Esophagus squamous epithelium (tissue), 5 donors: ENCODE measurements at regions of chr22 and their contacts with region 1.

Region 1: DNA sequence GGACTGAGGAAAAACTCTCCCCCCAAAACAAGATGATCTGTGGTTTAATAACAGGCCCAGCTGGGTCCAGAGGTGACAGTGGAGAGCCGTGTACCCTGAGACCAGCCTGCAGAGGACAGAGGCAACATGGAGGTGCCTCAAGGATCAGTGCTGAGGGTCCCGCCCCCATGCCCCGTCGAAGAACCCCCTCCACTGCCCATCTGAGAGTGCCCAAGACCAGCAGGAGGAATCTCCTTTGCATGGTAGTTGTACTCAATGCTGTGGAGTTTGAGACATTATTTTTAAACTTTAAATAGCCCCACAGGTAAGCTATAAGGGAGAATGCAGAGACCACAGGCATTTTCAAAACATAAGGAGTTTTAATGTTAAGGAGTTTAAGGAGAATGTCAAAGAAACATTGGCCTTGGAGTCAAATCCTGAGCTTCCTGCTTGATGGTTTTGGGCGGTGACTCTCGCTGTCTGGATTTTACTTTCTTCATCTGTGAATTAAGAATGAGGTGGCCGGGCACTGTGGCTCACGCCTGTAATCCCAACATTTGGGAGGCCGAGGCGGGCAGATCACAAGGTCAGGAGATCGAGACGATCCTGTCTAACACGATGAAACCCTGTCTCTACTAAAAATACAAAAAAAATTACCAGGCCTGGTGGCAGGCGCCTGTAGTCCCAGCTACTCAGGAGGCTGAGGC is 6.8 kb downstream of the APOL1 start:
- DNase-seq: no peak
- H3K4me3 ChIP-seq: no peak overlapping the region
- H3K27ac ChIP-seq: peak overlapping the region in 3 of 4 donors; percentile 41 to 55 (median 51)
- H3K4me1 ChIP-seq: peaks cover 13 to 42% (median 24%) of the 10 kb centered on the region in 3 donors
- H3K27me3 ChIP-seq: no peaks in the 10 kb centered on the region
- CTCF ChIP-seq: no peak
- POLR2A ChIP-seq: no peak

Region 2: GRCh38 chr22:35656284-35656752 is 603.4 kb before region 1 on chr22:
- intact Hi-C with region 1: loop called (anchors 5 kb)
- DNase-seq: no peak
- H3K4me3 ChIP-seq: no peak overlapping the region
- H3K27ac ChIP-seq: no peak overlapping the region
- H3K4me1 ChIP-seq: peaks cover 0 to under 1% (median 0%) of the 10 kb centered on the region in 3 donors
- H3K27me3 ChIP-seq: no peaks in the 10 kb centered on the region
- CTCF ChIP-seq: no peak
- POLR2A ChIP-seq: no peak

Region 3: DNA sequence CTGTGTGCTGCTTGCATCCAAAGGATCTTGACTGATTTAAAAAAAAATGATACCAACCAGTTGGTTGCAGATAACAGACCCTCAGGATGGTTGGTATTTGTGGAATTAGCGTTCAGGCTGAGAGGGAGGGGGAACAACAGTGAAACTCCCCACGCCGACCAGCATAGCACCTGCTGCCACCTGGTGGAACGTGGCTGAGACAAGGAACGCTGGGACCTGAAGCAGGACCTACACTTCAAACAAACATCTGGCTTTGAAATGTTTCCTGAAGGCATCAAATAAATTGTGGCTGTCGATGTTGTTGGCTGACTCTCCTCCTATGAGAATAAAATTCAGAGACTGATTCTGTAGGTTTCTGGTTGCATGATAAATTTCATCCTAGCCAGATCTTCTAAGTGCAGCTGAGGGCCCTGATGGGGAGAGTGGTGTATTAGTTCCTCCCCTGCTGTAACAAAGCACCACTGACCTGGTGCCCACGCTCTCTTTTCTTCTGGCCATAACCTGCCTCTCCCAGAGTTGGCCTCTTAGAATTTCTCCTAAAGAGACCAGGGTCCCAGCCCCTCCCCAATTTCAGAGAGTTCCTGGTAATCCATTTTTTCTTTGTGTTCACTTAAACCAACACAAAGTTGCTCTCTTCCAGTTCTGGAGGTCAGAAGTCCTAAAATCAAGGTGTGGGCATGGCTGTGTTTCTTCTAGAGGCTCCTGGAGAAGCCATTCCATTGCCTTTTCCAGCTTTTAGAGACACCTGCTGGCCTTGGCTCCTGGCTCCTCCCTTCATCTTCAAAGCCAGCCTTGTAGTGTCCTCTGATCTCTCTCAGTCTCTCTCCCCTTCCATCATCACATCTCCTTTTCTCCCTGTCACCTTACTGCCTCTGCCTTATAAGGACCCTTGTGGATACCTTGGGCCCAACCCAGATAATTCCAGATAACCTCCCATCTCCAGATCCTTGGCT is 37.7 kb before region 1 on chr22:
- intact Hi-C with region 1: no loop called
- DNase-seq: no peak
- H3K4me3 ChIP-seq: no peak overlapping the region
- H3K27ac ChIP-seq: no peak overlapping the region
- H3K4me1 ChIP-seq: peaks cover 0 to 14% (median 3%) of the 10 kb centered on the region in 3 donors
- H3K27me3 ChIP-seq: peaks cover 0 to 5% (median 0%) of the 10 kb centered on the region in 4 donors
- CTCF ChIP-seq: peak; percentile 27 to 77 (median 62)
- POLR2A ChIP-seq: no peak